ENCODE measurements at regions of chr18 and their contacts with region 1.

Region 1: GRCh38 chr18:57768537-57769326 is 34.4 kb downstream of the ATP8B1 start:
- DNase-seq: no peak
- H3K4me3 ChIP-seq: no peak overlapping the region
- H3K27ac ChIP-seq: peak overlapping the region; percentile 29 to 60
- H3K4me1 ChIP-seq: peaks cover 0 to 5% of the 10 kb centered on the region in 2 donors
- H3K27me3 ChIP-seq: no peaks in the 10 kb centered on the region
- CTCF ChIP-seq: no peak
- POLR2A ChIP-seq: no peak

Region 2: DNA sequence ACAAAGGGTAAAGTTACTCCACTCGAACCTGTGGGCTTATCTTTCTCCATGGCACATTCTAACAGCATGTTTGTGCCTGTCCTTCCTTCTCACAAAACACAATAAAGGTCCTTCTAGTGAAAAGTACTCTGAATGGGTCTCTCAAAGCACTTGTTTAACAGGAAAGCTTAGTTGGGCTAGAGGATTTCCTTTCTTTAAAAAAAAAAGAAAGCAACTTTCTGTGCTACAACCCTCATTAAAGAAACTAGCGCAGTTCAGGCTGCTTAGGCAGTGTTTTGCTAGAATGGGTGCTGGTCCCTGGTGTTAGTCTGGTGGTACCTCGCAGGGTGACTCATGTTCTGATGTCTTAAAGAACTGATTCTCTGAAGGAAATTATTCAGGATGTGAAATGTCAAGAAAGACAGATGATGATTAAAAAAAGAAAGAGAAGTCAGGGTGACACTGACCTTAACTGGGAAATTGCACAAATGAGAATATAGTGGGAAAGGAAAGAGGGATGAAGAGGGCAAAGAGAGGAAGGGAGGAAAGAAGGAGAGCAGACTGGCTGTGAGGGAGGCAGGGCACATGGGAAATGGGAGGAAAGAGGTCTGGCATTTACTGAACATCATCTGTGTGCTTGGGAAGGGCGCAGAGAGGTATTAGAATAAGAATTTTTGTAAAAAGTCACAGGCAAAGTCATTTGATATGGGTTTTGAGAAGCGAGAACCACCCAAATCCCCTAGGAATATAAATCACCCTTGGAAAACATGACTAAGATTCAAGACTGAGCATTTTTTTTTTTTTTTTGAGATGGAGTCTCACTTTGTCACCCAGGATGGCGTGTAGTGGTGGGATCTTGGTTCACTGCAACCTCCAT is 40.6 kb before region 1 on chr18:
- intact Hi-C with region 1: loop called (anchors 2 kb)
- DNase-seq: no peak
- H3K4me3 ChIP-seq: no peak overlapping the region
- H3K27ac ChIP-seq: peak overlapping the region; percentile 30 to 48
- H3K4me1 ChIP-seq: no peaks in the 10 kb centered on the region
- H3K27me3 ChIP-seq: no peaks in the 10 kb centered on the region
- CTCF ChIP-seq: no peak
- POLR2A ChIP-seq: no peak